ENCODE measurements at regions of chr7 and their contacts with region 1.

Region 1: GRCh38 chr7:149861446-149862045 is 12.2 kb upstream of the ATP6V0E2 start:
- DNase-seq: peak; percentile 23
- ATAC-seq: peak; percentile 26 to 87; a peak in 3 of 6 replicates
- H3K4me3 ChIP-seq: no peak overlapping the region
- H3K27ac ChIP-seq: no peak overlapping the region
- H3K4me1 ChIP-seq: no peaks in the 10 kb centered on the region
- CTCF ChIP-seq: peak; percentile 43
- EP300 ChIP-seq: no peak
- POLR2A ChIP-seq: no peak
- RAD21 ChIP-seq: peak; percentile 46 to 50; a peak in 4 of 5 replicates

Region 2: DNA sequence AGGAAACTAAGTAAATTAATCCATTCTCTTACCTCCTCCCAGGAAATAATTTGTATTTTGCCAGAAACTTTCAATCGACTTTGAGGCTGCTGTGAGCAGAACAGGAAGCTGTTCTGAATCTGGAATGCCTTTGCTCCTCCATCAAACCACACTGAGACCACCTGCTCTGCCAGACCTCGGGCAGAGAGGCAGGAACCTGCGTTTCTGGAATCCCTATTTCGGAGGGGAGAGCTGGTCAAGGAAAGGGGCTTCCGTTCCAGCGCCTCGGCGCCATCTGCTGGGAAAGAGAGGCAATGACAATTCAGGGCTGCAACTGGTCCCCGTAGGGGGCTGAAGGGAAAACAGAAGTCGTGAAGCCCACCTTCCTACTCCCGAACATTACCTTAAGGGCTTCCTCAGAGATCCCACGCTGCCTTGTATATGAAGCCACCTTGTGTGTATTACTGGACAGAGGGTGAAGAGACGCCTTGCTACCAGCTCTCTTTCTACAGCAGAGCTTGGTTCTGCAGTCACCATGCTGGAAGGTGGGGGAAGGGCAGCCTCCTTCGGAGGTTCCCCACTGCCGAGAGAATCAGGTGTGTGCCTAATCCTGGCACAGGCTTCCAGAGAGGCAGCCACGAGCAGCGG is 119.4 kb before region 1 on chr7:
- CTCF ChIA-PET with region 1: no interaction called
- POLR2A ChIA-PET with region 1: no interaction called
- DNase-seq: peak; percentile 62 to 93
- ATAC-seq: peak; percentile 90 to 96
- H3K4me3 ChIP-seq: peak overlapping the region; percentile 44
- H3K27ac ChIP-seq: peak overlapping the region; percentile 53 to 69; a peak in 5 of 6 replicates
- H3K4me1 ChIP-seq: no peaks in the 10 kb centered on the region
- CTCF ChIP-seq: peak; percentile 91
- EP300 ChIP-seq: no peak
- POLR2A ChIP-seq: no peak
- RAD21 ChIP-seq: peak; percentile 81 to 86

Region 3: DNA sequence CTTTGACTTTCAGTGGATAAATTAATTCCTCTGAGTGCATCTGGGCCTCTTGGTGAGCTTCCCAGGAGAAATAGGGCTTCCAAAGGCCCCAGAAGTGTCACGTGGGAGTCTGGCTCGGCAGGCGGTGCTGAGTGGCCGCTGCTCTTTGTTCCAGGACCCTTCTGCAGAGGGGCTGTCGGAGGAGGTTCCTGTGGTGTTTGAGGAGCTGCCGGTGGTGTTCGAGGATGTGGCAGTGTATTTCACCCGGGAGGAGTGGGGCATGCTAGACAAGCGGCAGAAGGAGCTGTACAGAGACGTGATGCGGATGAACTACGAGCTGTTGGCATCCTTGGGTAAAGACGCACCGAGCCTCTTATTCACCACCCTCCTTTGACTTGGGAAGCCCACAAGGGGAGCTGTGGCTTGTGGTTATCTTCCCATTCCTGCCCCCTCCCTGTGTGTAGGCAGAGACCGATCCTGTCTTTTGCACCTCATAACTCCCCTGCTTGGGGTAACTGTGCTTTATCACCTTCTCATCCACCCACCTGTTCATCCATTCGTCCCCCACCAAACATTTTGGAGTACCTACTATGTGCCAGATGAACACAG is 11.4 kb before region 1 on chr7:
- CTCF ChIA-PET with region 1: interaction called, 20 read pairs
- POLR2A ChIA-PET with region 1: no interaction called
- DNase-seq: no peak
- ATAC-seq: peak in 1 of 2 experiments; percentile 47; a peak in 1 of 6 replicates
- H3K4me3 ChIP-seq: no peak overlapping the region
- H3K27ac ChIP-seq: no peak overlapping the region
- H3K4me1 ChIP-seq: peaks cover 4% of the 10 kb centered on the region; the same call in 1 of the 3 replicates
- CTCF ChIP-seq: no peak
- EP300 ChIP-seq: no peak
- POLR2A ChIP-seq: no peak
- RAD21 ChIP-seq: no peak

Region 4: GRCh38 chr7:149883452-149883861 is 21.9 kb after region 1 on chr7:
- CTCF ChIA-PET with region 1: interaction called, 11 read pairs
- POLR2A ChIA-PET with region 1: no interaction called
- DNase-seq: peak; percentile 25 to 62
- ATAC-seq: peak; percentile 74 to 91
- H3K4me3 ChIP-seq: no peak overlapping the region
- H3K27ac ChIP-seq: no peak overlapping the region
- H3K4me1 ChIP-seq: no peaks in the 10 kb centered on the region
- CTCF ChIP-seq: peak; percentile 59
- EP300 ChIP-seq: no peak
- POLR2A ChIP-seq: no peak
- RAD21 ChIP-seq: peak; percentile 70 to 78